Right ventricle myocardium superior (tissue), 1 donor: ENCODE measurements at regions of chr3 and their contacts with region 1.

Region 1: GRCh38 chr3:98602078-98602678 is 8.8 kb upstream of the CPOX start:
- DNase-seq: no peak
- ATAC-seq: peak; percentile 93

Region 2: DNA sequence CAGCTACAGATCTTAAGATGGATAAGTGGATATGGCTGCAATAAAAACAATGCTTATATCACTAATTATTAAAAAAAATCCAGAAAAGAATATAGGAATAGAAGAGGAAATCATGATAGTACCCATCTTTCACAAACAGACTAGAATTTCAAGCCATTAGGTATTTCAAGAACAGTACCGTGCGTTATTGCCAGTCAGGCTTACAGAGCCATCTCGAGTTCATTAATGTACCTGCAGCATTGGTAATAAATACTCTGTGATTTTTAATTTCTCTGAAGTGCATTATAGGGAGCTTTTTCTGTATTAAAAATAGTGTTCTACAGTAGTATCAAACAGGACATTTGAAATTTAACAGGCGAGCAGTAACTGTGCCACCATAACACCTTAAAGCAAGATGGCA is 196.6 kb after region 1 on chr3:
- intact Hi-C with region 1: loop called (anchors 5 kb)
- DNase-seq: no peak
- ATAC-seq: peak; percentile 57

Region 3: GRCh38 chr3:98817547-98818041 is 215.4 kb after region 1 on chr3:
- intact Hi-C with region 1: loop called (anchors 2 kb)
- DNase-seq: no peak
- ATAC-seq: peak; percentile 85

Region 4: GRCh38 chr3:98994128-98994762 is 392.1 kb after region 1 on chr3:
- intact Hi-C with region 1: loop called (anchors 5 kb)
- DNase-seq: no peak
- ATAC-seq: peak; percentile 60